Dorsolateral prefrontal cortex (tissue), 120 donors: ENCODE measurements at regions of chr14 and their contacts with region 1.

Region 1: DNA sequence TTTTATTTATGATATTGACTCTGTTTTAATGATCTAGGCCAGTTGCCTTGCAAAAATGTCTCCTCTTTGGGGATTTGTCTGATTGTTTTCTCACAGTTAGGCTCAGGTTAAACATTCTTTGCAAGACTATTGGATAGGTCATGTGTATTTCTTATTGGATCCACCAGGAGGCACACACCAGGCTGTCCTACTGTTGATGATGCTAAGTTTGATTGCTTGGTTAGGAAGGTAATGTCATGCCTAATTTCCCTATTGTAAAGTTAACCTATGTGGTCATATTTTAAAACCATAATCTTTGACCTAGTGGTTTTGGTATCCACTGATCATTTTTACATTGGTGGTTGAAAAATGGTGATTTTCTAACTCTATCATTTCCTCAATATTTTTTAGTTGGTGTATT is 137.1 kb downstream of the BRMS1L start:
- DNase-seq: no peak
- H3K4me3 ChIP-seq: no peak overlapping the region
- H3K27ac ChIP-seq: peak overlapping the region in 8 of 59 donors; percentile 19 to 97 (median 92)
- H3K27me3 ChIP-seq: no peaks in the 10 kb centered on the region
- CTCF ChIP-seq: peak in 26 of 56 donors; percentile 7 to 51 (median 25)

Region 2: GRCh38 chr14:36028218-36028617 is 65.0 kb after region 1 on chr14:
- intact Hi-C with region 1: loop called in 1 of 2 experiments (anchors 10 kb)
- DNase-seq: no peak
- H3K4me3 ChIP-seq: no peak overlapping the region
- H3K27ac ChIP-seq: no peak overlapping the region
- H3K27me3 ChIP-seq: no peaks in the 10 kb centered on the region
- CTCF ChIP-seq: no peak

Region 3: DNA sequence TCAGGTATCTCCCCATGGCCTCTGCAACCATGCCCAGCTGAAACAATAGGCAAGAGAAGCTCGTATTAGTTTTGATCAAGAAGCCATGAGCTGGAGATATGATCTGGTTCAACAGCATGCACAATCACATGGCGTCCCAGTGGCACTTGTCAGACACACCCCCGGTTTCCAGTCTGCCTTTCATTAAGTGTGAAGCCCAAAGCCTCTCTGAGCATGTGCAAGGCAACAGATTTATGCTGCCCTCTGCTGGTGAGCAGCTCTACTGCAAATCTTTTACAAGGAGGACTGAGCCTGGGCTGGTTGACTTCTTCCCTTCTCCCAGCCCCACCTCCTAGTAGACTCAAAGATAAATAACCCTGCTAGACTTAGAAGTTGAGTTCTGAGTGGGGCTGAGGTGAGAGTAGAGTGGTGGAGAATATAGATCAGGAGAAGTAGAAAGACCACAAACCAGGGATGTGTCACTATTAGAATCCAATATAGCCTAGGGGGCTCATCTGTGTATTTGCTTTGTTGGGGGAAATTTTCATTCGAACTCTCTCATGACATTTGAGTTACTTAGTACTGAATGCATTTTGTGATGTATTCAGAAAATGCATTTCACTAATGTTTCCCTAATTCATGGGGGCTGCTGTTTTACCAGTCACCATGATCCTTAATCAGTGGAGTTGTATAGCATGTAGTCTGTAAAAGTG is 410.9 kb after region 1 on chr14:
- intact Hi-C with region 1: loop called in 1 of 2 experiments (anchors 5 kb)
- DNase-seq: peak; percentile 21 to 82 (median 60)
- H3K4me3 ChIP-seq: no peak overlapping the region
- H3K27ac ChIP-seq: no peak overlapping the region
- H3K27me3 ChIP-seq: peaks cover 0 to 7% (median 0%) of the 10 kb centered on the region in 45 donors
- CTCF ChIP-seq: peak; percentile 57 to 95 (median 85)